ENCODE measurements at regions of chr2 and their contacts with region 1.

Region 1: DNA sequence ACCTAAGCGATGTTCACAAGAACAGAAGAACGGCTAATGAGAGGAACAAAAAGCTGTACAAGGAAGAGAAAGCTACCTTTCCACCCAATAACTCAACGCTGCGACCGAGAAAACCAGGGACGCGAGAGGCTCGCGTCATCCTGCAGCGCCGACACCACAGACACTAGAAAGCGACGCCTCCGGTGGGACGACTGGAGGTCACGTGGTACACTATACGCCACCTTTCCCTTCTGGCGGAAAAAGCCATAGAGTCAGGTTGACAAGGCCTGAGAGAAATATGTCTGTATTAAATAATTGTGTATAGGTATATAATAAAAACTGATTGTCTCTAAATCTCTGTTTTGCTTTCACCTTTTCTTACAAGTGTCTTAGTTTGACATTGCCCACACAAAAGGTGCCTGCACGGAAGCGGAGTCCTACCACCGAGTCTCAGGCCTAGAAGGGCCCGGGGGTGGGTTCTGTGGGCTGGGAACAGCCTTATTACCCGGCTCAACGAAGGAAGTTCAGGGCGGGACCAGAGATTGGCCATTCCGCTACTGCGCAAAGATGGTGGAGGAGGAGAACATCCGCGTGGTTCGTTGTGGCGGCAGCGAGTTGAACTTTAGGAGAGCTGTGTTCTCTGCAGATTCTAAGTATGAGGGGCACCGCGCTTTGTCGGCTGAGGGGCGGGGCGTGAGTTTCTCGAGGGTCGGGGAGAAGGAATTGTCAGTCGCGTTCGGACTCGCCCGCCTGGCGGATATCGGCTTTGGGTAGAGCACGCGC is at the start of gene WDR75:
- DNase-seq: peak; percentile 89
- H3K4me3 Mint-ChIP-seq: no peak within 1 kb of the TSS
- H3K27ac Mint-ChIP-seq: peak within 1 kb of the TSS; percentile 99
- H3K4me1 Mint-ChIP-seq: peaks cover 8% of the 10 kb centered on the region
- H3K27me3 Mint-ChIP-seq: peaks cover 3% of the 10 kb centered on the region
- total RNA-seq, gene WDR75: 108 and 112 TPM in 2 replicates

Region 2: GRCh38 chr2:188978291-188979081 is 462.6 kb before region 1 on chr2:
- intact Hi-C with region 1: loop called (anchors 2 kb)
- DNase-seq: no peak
- H3K4me3 Mint-ChIP-seq: peak overlapping the region; percentile 5
- H3K27ac Mint-ChIP-seq: peak overlapping the region; percentile 77
- H3K4me1 Mint-ChIP-seq: peaks cover 17% of the 10 kb centered on the region
- H3K27me3 Mint-ChIP-seq: peaks cover 2% of the 10 kb centered on the region

Region 3: GRCh38 chr2:189580658-189581353 is 139.7 kb after region 1 on chr2 and contains the start of gene SLC40A1:
- intact Hi-C with region 1: loop called (anchors 1 kb)
- DNase-seq: peak; percentile 58
- H3K4me3 Mint-ChIP-seq: peak within 1 kb of the TSS; percentile 84
- H3K27ac Mint-ChIP-seq: no peak within 1 kb of the TSS
- H3K4me1 Mint-ChIP-seq: peaks cover 15% of the 10 kb centered on the region
- H3K27me3 Mint-ChIP-seq: peaks cover 40% of the 10 kb centered on the region
- total RNA-seq, gene SLC40A1: 0.86 and 1.2 TPM in 2 replicates

Region 4: DNA sequence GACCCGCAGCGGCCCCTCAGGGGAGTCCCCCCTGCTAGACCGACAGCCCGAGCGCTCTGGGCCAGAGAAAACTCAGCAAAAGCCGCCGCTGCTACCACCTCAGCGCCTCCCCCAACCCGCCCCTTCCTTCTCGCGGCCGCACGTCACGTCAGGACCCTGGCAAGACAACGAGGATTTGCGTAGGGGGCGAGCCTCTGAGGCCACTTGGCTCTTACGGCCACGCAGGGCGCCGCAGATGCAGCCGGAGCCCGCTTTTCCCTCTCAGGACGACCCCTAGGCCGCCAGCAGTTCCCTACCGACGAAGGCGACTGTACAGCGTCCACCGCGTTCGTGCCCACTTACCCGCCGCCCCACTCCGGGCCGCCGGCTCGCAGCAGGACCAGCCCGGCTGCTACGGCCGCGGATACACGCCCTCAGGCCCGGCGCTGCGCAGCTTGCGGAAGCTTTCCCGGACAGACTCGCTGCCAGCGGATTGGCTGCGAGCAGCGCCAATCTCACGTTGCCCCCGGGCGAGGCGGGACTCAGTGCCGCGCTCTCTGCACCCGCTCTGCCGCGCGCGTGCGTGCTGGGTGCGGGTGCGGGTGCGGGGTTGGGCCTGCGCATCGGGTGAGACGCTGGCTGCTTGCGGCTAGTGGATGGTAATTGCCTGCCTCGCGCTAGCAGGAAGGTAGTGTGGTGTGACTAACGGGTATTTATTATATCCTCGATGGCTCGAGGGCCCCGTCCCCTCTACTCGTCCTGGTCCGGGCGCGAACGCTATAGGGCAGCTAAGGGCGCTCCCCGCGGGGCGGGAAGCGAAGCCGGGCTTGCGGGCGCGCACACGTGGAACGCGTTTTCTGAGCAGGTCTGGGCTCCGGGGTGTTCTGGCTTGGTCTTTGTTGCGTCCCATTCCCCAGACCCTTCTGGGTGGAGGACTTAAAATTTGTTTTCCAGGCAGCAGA is 343.1 kb after region 1 on chr2 and contains the starts of genes ORMDL1 and PMS1:
- intact Hi-C with region 1: loop called (anchors 1 kb)
- DNase-seq: peak; percentile 94
- H3K4me3 Mint-ChIP-seq: peak within 1 kb of the TSS; percentile 92
- H3K27ac Mint-ChIP-seq: peak within 1 kb of the TSS; percentile 93
- H3K4me1 Mint-ChIP-seq: peaks cover 40% of the 10 kb centered on the region
- H3K27me3 Mint-ChIP-seq: no peaks in the 10 kb centered on the region
- total RNA-seq, gene ORMDL1: 78.7 and 80.1 TPM in 2 replicates
- total RNA-seq, gene PMS1: 54.4 and 55.9 TPM in 2 replicates

Measured in activated T-helper 1 cell treated with anti-CD3 and anti-CD28 coated beads, Interleukin-12 subunit alpha, Interleukin-12 subunit beta, Interleukin-2, Interleukin-4 antibody, amounts not matched to agents 30 ng/mL and 10 ng/mL and 1 ng/mL, durations not matched to agents 14 hours and 24 hours and 36 hours (primary cell).